IMR-90 (cell line): ENCODE measurements at regions of chr12 and their contacts with region 1.

Region 1: GRCh38 chr12:127108360-127109215 is 1158.4 kb upstream of the TMEM132C start:
- DNase-seq: peak; percentile 42
- ATAC-seq: no peak
- H3K4me3 ChIP-seq: no peak overlapping the region
- H3K27ac ChIP-seq: no peak overlapping the region
- H3K4me1 ChIP-seq: no peaks in the 10 kb centered on the region
- H3K27me3 ChIP-seq: no peaks in the 10 kb centered on the region
- CTCF ChIP-seq: peak; percentile 51
- POLR2A ChIP-seq: no peak
- RAD21 ChIP-seq: peak; percentile 61

Region 2: GRCh38 chr12:127293507-127294310 is 185.1 kb after region 1 on chr12:
- CTCF ChIA-PET with region 1: interaction called, 22 read pairs
- POLR2A ChIA-PET with region 1: no interaction called
- dilution Hi-C with region 1: no loop called
- in situ Hi-C with region 1: loop called (anchors 5 kb)
- intact Hi-C with region 1: no loop called
- DNase-seq: peak; percentile 33
- ATAC-seq: peak; percentile 40; the same call in 1 of the 2 replicates
- H3K4me3 ChIP-seq: no peak overlapping the region
- H3K27ac ChIP-seq: no peak overlapping the region
- H3K4me1 ChIP-seq: no peaks in the 10 kb centered on the region
- H3K27me3 ChIP-seq: no peaks in the 10 kb centered on the region
- CTCF ChIP-seq: peak; percentile 64
- POLR2A ChIP-seq: no peak
- RAD21 ChIP-seq: peak; percentile 88